ENCODE measurements at regions of chr11 and their contacts with region 1.

Region 1: DNA sequence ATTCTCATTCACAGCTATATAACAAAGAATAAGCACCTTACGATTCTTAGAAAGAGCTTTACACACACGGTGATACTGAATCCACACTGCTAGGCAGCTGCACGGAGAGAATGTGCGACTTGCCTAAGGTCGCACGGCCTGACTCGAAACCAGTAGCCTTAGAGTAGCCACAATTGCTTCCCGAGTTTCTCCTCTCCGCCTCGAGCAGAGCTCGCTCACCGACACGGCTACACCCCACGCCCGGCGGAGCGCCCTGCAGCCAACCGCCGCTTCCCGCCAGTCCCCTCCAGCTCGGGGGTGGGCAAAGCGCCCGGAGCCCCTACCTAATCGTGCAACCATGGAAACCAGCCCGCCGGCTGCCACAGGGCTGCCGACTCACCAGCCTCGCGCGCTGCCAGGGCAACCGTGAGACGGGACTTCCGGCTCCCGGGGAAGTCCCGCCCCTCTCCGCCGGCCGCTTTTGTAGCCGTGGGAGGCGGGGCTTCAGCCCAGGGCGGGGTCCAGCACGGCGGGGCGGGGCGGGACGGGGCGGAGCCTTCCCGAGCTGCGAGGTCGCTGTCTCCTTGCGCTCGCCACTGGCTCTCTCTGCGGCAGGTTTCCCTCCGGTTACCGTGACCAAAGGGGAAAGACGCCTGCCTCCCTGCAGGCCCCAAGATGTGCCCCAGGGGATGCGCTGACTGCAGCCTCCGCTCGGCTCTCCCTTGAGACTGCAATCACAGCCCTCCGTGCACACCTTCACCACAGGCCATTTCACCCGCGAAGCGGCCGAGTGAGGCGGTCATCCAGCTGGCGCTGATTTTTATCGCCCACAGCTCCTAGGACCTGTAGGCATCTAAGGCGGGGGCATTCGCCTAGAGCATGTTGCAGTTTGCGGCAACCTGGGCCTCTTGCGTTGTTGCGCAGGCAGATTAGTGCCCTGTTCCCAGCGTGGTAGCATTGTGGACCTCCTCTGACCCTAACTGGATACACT is 1.1 kb downstream of the BSCL2 start:
- DNase-seq: peak; percentile 82 to 96 (median 91)
- ATAC-seq: peak; percentile 69 to 75 (median 73)
- H3K4me3 ChIP-seq: peak overlapping the region; percentile 59 to 62
- H3K4me3 Mint-ChIP-seq: peak overlapping the region; percentile 85 to 97 (median 87)
- H3K27ac ChIP-seq: peak overlapping the region; percentile 83
- H3K27ac Mint-ChIP-seq: peak overlapping the region; percentile 82 to 84
- H3K4me1 ChIP-seq: peaks cover 19 to 48% of the 10 kb centered on the region in 2 experiments
- H3K4me1 Mint-ChIP-seq: peaks cover 43 to 51% (median 47%) of the 10 kb centered on the region in 3 donors
- H3K27me3 ChIP-seq: no peaks in the 10 kb centered on the region
- H3K27me3 Mint-ChIP-seq: no peaks in the 10 kb centered on the region

Region 2: DNA sequence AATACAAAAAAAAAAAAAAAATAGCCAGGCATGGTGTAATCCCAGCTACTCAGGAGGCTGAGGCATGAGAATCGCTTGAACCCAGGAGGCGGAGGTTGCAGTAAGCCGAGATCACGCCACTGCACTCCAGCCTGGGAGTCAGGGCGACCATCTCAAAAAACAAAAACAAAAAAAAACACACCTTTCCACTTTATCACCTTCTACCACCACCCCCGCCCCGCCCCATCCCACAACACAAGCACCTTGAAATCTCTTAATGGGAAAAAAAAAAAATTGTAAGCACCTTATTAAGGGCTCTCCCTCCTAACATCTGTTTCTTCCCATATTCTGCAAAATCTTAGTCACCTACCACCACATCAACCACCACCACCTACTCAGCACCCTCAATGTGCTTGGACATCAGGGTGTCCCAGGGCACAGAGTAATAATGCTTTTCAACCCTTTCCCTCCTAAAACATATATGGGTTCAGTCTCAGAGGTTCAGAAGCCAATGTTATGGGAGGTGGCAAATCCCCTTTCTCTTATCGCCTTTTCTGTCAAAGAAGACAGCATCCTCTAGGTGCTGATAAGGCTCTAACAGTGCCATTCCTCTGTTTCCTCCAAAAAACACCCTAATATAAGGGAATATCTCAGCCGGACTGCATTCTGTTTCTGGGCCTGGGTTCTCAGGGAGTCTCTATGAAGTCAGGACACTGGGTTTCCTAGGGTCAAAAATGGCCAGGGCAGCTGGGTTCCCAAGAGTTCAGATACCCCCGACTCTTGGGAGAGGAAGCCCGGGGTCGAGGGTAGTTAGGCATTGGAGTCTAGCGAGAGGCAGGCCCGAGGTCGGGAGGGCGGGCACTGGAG is 53.8 kb before region 1 on chr11:
- CTCF ChIA-PET with region 1: no interaction called
- POLR2A ChIA-PET with region 1: interaction called in 1 of 2 experiments, 10 read pairs
- DNase-seq: peak in 9 of 35 experiments; percentile 16 to 72 (median 40)
- ATAC-seq: peak; percentile 5 to 11 (median 8)
- H3K4me3 ChIP-seq: peak overlapping the region; percentile 69 to 95
- H3K4me3 Mint-ChIP-seq: peak overlapping the region; percentile 87 to 97 (median 88)
- H3K27ac ChIP-seq: peak overlapping the region; percentile 63
- H3K27ac Mint-ChIP-seq: peak overlapping the region; percentile 85 to 90
- H3K4me1 ChIP-seq: peaks cover 7 to 42% of the 10 kb centered on the region in 2 experiments
- H3K4me1 Mint-ChIP-seq: peaks cover 19 to 28% (median 19%) of the 10 kb centered on the region in 3 donors
- H3K27me3 ChIP-seq: no peaks in the 10 kb centered on the region
- H3K27me3 Mint-ChIP-seq: no peaks in the 10 kb centered on the region

Region 3: GRCh38 chr11:62778441-62778840 is 72.3 kb after region 1 on chr11:
- CTCF ChIA-PET with region 1: no interaction called
- POLR2A ChIA-PET with region 1: no interaction called
- DNase-seq: no peak
- ATAC-seq: no peak
- H3K4me3 ChIP-seq: no peak overlapping the region
- H3K4me3 Mint-ChIP-seq: no peak overlapping the region
- H3K27ac ChIP-seq: no peak overlapping the region
- H3K27ac Mint-ChIP-seq: peak overlapping the region in 1 of 2 donors; percentile 45
- H3K4me1 ChIP-seq: peaks cover 0 to 9% of the 10 kb centered on the region in 2 experiments
- H3K4me1 Mint-ChIP-seq: peaks cover 0 to 10% (median 5%) of the 10 kb centered on the region in 3 donors
- H3K27me3 ChIP-seq: no peaks in the 10 kb centered on the region
- H3K27me3 Mint-ChIP-seq: no peaks in the 10 kb centered on the region

Region 4: GRCh38 chr11:63417174-63417852 is 711.1 kb after region 1 on chr11:
- CTCF ChIA-PET with region 1: no interaction called
- POLR2A ChIA-PET with region 1: no interaction called
- DNase-seq: no peak
- ATAC-seq: no peak
- H3K4me3 ChIP-seq: no peak overlapping the region
- H3K4me3 Mint-ChIP-seq: no peak overlapping the region
- H3K27ac ChIP-seq: no peak overlapping the region
- H3K27ac Mint-ChIP-seq: no peak overlapping the region
- H3K4me1 ChIP-seq: peaks cover 0 to 15% of the 10 kb centered on the region in 2 experiments
- H3K4me1 Mint-ChIP-seq: peaks cover 19 to 32% (median 20%) of the 10 kb centered on the region in 3 donors
- H3K27me3 ChIP-seq: peaks cover 2 to 3% of the 10 kb centered on the region in 2 experiments
- H3K27me3 Mint-ChIP-seq: peaks cover 0 to 5% of the 10 kb centered on the region in 2 donors

Measured in T-cell (primary cell).